Posterior cingulate gyrus (tissue), 11 donors: ENCODE measurements at regions of chr9 and their contacts with region 1.

Region 1: GRCh38 chr9:129569502-129570449 is 51.1 kb downstream of the C9orf50 start:
- DNase-seq: no peak

Region 2: DNA sequence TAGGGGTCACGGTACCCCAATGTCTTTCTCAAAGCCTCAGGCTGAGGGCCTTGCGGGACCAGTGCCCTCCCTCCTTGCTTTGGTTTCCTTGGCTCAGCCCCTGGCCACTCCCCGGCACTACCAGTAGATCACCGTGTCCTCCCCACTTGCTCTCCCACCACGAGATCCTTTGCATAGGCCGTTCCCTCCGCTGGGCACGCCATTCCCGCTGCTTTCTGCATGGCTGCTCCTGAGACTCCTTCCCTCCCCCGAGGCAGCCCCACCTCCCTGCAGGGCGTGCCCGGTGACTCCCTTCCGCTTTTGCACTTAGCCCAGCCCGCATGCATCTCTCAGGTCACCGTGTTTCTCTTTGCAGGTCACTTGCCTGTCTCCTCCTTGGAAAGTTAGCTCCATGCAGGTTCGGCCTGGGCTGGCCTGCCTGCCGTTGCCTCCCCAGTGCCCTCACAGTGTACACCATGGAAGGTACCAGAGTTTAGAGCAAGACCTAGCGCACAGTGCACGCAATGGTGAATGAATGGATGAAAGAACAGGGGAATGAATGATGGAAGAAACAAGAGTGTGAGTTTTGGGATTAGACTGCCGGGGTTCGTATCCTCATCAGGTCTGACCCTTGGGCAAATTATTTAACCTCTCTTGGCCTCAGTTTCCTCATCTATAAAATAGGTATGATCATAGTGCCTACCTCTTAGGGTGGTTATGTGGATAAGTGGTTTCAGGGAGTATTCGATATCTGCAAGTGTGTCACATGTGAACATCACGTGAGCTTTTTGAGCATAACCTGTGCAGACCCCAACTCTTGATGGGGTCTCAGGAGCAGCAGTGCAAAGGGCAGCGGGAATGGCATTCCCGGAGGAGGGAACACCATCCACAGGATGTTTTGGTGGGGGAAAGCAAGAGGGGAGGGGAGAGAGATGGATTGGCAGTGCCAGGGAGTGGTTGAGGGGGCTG is 163.2 kb before region 1 on chr9:
- intact Hi-C with region 1: no loop called
- DNase-seq: peak in 3 of 10 donors; percentile 53 to 81 (median 53)

Region 3: GRCh38 chr9:129489838-129490582 is 79.8 kb before region 1 on chr9:
- intact Hi-C with region 1: loop called (anchors 5 kb)
- DNase-seq: peak in 4 of 10 donors; percentile 46 to 88 (median 68)

Region 4: GRCh38 chr9:129610473-129611301 is 40.9 kb after region 1 on chr9:
- intact Hi-C with region 1: no loop called
- DNase-seq: peak; percentile 54 to 96 (median 78)

Region 5: DNA sequence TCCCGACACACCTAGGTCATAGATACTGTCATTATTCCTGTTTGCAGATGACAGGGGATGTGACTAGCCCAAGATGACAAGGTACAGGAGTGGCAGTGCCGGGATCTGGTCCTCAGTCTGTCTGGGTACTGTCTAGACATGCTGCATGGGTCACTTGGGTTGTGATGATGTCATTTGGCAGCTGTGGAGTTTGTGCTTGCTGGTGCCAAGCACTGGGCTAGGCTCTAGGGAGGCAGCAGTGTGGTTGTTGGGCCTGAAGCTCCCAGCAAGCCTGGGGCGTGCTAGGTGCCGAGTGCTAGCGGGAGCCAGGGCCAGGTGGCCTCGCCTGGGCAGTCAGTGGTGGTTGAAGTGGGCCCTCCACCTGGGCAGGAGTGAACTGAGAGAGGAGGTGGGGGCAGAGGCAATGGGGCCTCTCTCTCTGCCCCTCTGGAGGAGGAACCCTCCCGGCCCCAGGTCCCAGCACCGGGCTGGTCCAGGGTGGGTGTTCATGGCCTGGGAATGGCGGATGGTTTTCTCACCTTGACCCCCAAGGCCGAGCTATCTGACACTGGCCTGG is 81.0 kb after region 1 on chr9:
- intact Hi-C with region 1: no loop called
- DNase-seq: no peak

Region 6: DNA sequence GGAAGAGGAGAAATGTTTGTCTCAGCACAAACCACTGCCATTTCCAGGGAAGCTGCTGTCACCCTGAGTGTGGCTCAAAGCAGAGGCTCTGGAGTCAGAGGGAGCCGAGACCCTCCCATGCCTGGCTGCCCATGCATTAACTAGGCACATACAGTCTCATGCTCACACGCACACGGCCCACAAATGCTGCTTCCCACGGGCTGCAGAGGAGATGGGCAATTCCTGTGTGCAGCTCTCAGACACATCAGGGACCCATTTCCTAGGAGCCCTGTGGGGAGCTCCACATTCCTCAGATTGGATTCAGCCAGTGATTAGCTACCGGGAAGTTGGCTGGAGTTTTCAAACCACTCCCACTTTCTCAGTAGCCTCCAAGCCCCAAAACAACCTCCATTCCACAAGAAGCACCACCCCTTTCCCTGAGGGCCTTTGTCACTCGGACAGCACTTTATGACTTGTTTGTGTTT is 192.2 kb after region 1 on chr9:
- intact Hi-C with region 1: no loop called
- DNase-seq: no peak